Activated T-helper 1 cell treated with anti-CD3 and anti-CD28 coated beads, Interleukin-12 subunit alpha, Interleukin-12 subunit beta, Interleukin-2, Interleukin-4 antibody, amounts not matched to agents 30 ng/mL and 10 ng/mL and 1 ng/mL, durations not matched to agents 14 hours and 24 hours and 36 hours (primary cell): ENCODE measurements at regions of chr1 and their contacts with region 1.

Region 1: GRCh38 chr1:162040681-162041080 is 17.0 kb upstream of the OLFML2B start:
- DNase-seq: no peak
- H3K4me3 Mint-ChIP-seq: no peak overlapping the region
- H3K27ac Mint-ChIP-seq: no peak overlapping the region
- H3K4me1 Mint-ChIP-seq: no peaks in the 10 kb centered on the region
- H3K27me3 Mint-ChIP-seq: peaks cover 7% of the 10 kb centered on the region

Region 2: DNA sequence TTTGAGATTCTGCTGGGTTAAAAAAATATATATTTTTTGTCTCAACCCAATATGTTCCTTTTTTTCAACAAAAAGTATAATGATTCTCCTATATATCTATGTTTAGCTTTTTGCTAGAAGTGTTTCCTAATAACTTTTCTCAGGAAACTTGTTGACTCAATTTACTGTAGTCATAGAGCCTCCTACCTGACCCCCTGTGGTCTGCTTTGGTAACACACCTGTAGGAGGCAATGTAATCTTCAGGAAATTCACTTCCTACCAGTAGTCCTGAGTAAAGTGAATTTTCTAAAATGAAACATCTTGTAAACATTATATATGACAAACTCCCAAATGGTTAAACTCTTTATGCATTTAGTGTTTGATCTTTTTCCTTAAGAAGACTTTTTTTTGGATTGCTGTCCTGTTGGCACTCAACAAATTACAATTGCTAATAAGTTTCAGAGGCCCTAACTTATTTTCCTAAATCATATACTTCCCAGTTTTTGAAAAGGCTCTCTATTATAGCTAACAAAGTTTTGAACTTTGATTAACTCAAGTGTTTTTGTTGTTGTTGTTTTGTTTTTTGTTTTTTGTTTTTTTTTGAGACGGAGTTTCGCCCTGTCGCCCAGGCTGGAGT is 135.3 kb before region 1 on chr1:
- intact Hi-C with region 1: loop called (anchors 5 kb)
- DNase-seq: no peak
- H3K4me3 Mint-ChIP-seq: no peak overlapping the region
- H3K27ac Mint-ChIP-seq: no peak overlapping the region
- H3K4me1 Mint-ChIP-seq: no peaks in the 10 kb centered on the region
- H3K27me3 Mint-ChIP-seq: no peaks in the 10 kb centered on the region

Region 3: GRCh38 chr1:161978011-161978790 is 62.5 kb before region 1 on chr1:
- intact Hi-C with region 1: no loop called
- DNase-seq: no peak
- H3K4me3 Mint-ChIP-seq: no peak overlapping the region
- H3K27ac Mint-ChIP-seq: no peak overlapping the region
- H3K4me1 Mint-ChIP-seq: no peaks in the 10 kb centered on the region
- H3K27me3 Mint-ChIP-seq: no peaks in the 10 kb centered on the region